Heart right ventricle (tissue), 16 donors: ENCODE measurements at regions of chr1 and their contacts with region 1.

Region 1: DNA sequence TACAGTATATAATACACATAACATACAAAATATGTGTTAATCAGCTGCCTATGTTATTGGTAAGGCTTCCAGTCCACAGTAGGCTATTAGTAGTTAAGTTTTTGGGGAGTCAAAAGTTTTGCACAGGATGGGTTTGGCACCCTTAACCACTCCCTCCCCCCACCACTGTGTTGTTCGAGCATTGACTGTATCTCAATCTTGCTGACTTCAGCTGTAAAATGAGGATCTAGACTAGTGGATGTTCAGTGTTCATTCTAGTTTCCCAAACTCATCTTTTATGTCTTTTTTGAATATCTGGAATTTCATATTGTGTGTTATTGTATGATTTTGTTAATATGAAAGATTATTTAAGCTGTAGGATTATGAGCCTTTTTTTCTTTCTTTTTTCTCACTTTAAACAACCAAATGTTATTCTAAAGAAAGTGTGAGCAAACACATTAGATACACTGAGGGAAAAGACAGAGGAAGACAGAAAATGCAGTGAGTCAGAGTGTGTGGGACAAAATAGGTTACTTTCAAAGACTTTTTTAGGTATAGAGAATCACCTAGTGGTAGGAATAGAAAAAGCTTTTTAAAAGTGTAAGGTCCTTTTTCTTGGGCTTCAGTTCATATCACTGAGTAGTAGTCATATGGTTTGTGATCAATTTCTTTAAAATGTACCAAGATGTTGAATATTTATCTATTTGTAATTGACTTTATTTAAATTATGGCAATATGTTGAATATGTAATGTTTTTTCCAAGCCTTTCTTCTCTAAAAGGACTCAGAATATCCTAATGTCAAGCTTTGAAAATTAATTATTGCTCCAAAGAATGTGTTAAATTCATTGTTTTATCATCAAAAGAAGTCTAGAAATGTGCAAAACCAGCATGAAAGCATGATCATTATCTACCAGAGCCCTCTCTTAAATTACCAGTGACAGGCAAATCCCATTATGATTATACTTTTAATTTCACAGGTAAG is 17.9 kb upstream of the CENPF start:
- DNase-seq: no peak
- ATAC-seq: peak in 7 of 8 donors; percentile 72 to 87 (median 76)
- H3K4me3 ChIP-seq: no peak overlapping the region
- H3K27ac ChIP-seq: no peak overlapping the region
- H3K4me1 ChIP-seq: peaks cover 0 to 3% (median 0%) of the 10 kb centered on the region in 9 donors
- H3K27me3 ChIP-seq: no peaks in the 10 kb centered on the region
- CTCF ChIP-seq: peak; percentile 44 to 86 (median 76)

Region 2: GRCh38 chr1:214213136-214213535 is 371.9 kb before region 1 on chr1:
- intact Hi-C with region 1: loop called in 9 of 10 experiments (anchors 2 to 10 kb)
- DNase-seq: no peak
- ATAC-seq: no peak
- H3K4me3 ChIP-seq: no peak overlapping the region
- H3K27ac ChIP-seq: no peak overlapping the region
- H3K4me1 ChIP-seq: peaks cover 0 to 11% (median 4%) of the 10 kb centered on the region in 9 donors
- H3K27me3 ChIP-seq: peaks cover 0 to 5% (median 0%) of the 10 kb centered on the region in 7 donors
- CTCF ChIP-seq: no peak

Region 3: DNA sequence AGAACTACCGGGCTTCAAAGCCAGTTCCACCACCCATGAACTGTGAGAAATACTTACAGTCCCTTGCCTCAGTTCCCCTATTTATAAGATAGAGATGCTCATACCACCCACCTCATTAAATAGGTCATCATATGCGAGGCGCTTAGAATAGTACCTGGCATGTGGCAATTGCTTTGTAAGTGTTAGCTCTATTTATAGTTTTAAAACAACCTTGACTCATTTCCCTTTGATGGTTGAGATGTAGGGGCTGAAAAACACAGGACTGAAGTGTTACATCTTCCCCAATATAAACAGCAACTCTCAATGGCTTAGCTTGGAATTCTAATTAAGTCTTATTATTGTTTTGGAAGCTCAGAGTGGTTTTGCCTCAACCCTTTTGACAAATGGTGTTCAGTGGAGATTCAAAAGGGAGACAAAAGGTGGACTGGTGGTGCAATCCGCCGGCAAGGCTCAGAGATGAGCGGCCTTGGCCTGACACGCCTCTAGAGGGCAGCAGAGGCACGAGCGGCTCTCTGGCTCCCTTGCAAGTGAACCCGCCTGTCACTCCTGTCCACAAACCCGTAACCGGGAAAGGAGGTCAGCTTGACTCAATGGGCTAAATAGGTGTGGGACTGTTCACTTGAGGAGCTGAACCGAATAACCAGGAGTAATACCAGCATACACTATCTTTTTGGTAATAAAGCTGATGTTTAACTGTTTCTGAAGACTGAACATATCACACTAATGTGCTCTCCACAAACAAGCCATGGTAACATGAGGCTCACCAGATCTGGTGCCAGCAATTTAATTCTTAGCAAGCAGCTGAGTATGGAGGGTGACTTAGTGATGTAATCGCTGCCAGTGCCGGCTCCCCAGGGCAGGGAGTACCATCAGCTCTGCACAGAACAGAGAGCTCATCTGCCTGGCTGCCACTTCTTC is 323.6 kb before region 1 on chr1:
- intact Hi-C with region 1: loop called in 4 of 10 experiments (anchors 5 to 10 kb)
- DNase-seq: peak; percentile 86 to 87
- ATAC-seq: peak; percentile 93 to 98 (median 96)
- H3K4me3 ChIP-seq: no peak overlapping the region
- H3K27ac ChIP-seq: peak overlapping the region in 7 of 10 donors; percentile 23 to 85 (median 66)
- H3K4me1 ChIP-seq: peaks cover 0 to 20% (median 7%) of the 10 kb centered on the region in 9 donors
- H3K27me3 ChIP-seq: peaks cover 0 to 67% (median 24%) of the 10 kb centered on the region in 7 donors
- CTCF ChIP-seq: peak; percentile 92 to 99 (median 98)

Region 4: DNA sequence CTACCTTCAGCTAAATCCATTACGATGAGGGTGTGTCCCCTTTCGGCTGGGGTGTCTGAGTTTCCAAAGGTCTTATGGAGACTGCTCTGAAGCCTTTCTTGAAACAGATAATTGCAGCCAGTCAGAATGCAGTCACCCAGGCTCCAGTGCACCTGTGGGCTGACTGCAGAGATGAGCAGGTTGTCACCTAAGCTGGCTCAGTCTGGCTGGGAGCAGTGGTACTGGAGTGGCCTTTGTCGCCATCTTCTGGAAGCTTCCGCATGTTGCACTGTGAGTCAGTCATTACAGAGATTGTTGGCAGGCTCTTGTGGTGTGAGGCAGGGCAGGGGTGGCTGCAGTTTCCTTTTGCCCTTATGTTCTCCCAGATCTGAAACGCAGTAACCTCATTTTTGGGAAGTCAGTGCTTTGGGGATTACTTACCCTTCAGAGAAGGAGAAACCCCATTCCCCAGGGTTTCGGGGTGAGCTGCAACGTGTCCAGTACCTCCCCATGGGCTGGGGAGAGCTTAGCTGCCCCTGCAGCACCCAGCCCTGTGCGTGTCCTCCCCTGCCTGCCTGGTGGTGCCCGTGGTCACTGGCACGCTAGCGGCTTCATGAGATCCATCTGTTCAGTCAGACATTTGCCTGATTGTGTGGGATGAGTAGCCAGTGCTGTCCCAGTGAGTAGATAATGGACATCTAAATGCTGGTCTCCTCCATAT is 256.2 kb before region 1 on chr1:
- intact Hi-C with region 1: loop called in 9 of 10 experiments (anchors 1 to 10 kb)
- DNase-seq: peak; percentile 74 to 83
- ATAC-seq: peak; percentile 83 to 91 (median 88)
- H3K4me3 ChIP-seq: no peak overlapping the region
- H3K27ac ChIP-seq: peak overlapping the region in 6 of 10 donors; percentile 31 to 86 (median 76)
- H3K4me1 ChIP-seq: peaks cover 6 to 62% (median 27%) of the 10 kb centered on the region in 9 donors
- H3K27me3 ChIP-seq: no peaks in the 10 kb centered on the region
- CTCF ChIP-seq: peak; percentile 83 to 96 (median 92)

Region 5: GRCh38 chr1:214337511-214337910 is 247.6 kb before region 1 on chr1:
- intact Hi-C with region 1: loop called in 9 of 10 experiments (anchors 1 to 10 kb)
- DNase-seq: no peak
- ATAC-seq: peak in 7 of 8 donors; percentile 43 to 73 (median 52)
- H3K4me3 ChIP-seq: no peak overlapping the region
- H3K27ac ChIP-seq: peak overlapping the region in 9 of 10 donors; percentile 32 to 88 (median 80)
- H3K4me1 ChIP-seq: peaks cover 4 to 58% (median 18%) of the 10 kb centered on the region in 9 donors
- H3K27me3 ChIP-seq: no peaks in the 10 kb centered on the region
- CTCF ChIP-seq: no peak

Region 6: GRCh38 chr1:214386747-214387146 is 198.3 kb before region 1 on chr1:
- intact Hi-C with region 1: loop called in 6 of 10 experiments (anchors 5 to 10 kb)
- DNase-seq: no peak
- ATAC-seq: no peak
- H3K4me3 ChIP-seq: no peak overlapping the region
- H3K27ac ChIP-seq: no peak overlapping the region
- H3K4me1 ChIP-seq: no peaks in the 10 kb centered on the region
- H3K27me3 ChIP-seq: no peaks in the 10 kb centered on the region
- CTCF ChIP-seq: no peak

Region 7: DNA sequence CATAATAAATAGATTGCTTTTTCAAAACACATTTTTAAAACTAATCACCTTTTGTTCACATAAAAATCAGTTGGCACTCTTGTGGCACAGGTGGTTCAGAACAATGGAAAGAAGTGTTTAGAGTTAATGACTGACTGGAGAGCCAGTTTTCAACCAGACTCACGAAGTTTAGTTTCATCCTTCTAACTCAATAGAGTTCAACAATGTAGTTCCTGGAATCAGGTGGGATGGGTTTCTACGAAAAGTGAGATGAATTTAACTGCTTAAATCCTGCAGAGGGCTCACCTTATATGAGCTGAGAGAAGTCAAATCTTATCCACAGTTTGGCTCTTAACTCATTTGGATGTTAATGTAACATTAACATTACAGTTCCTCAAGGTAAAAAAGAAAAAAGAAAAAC is 187.6 kb before region 1 on chr1:
- intact Hi-C with region 1: loop called in 1 of 10 experiments (anchors 10 kb)
- DNase-seq: no peak
- ATAC-seq: no peak
- H3K4me3 ChIP-seq: no peak overlapping the region
- H3K27ac ChIP-seq: no peak overlapping the region
- H3K4me1 ChIP-seq: peaks cover 0 to 10% (median 0%) of the 10 kb centered on the region in 9 donors
- H3K27me3 ChIP-seq: no peaks in the 10 kb centered on the region
- CTCF ChIP-seq: no peak

Region 8: GRCh38 chr1:214473387-214473786 is 111.7 kb before region 1 on chr1:
- intact Hi-C with region 1: no loop called
- DNase-seq: no peak
- ATAC-seq: no peak
- H3K4me3 ChIP-seq: no peak overlapping the region
- H3K27ac ChIP-seq: no peak overlapping the region
- H3K4me1 ChIP-seq: peaks cover 2 to 62% (median 44%) of the 10 kb centered on the region in 9 donors
- H3K27me3 ChIP-seq: no peaks in the 10 kb centered on the region
- CTCF ChIP-seq: no peak

Region 9: DNA sequence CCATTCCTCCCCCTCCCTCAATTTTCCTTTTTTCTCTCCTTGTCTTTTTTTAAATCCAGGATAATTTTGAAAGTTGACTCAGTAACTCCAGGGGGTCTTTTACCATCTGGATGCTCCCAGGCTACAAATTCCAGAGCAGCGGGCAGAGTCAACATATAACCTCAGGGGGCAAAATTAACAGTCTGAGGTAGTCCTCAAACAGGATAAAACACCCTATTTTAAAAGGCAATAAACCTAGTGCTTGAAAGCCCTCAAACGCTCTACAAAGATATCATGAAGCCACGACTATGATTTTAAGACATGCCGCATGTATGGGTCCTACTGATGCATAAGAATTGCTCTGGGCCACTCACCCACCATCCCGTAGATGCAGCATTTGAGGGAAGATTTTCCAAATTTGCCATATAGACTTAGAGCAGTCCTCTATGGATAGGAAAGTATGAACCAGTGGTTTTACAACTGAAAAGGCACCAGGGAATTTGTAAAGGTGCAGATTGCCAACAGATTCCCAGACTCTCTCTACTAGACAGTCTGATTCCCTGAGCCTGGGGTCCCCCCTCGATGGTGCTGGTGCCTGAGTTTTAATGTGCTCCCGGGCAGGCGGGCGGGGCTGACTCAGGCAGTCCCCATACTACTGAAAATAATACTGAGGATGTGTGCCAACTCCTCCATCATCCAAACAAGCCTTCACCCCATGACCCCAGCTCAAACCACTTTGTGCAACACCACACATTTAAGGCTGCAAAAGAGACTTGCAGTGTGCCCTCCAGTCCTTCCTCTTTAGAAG is 70.9 kb before region 1 on chr1:
- intact Hi-C with region 1: no loop called
- DNase-seq: no peak
- ATAC-seq: peak in 2 of 8 donors; percentile 7 to 29
- H3K4me3 ChIP-seq: no peak overlapping the region
- H3K27ac ChIP-seq: no peak overlapping the region
- H3K4me1 ChIP-seq: peaks cover 2 to 53% (median 24%) of the 10 kb centered on the region in 9 donors
- H3K27me3 ChIP-seq: no peaks in the 10 kb centered on the region
- CTCF ChIP-seq: no peak

Region 10: GRCh38 chr1:214525535-214526019 is 59.5 kb before region 1 on chr1:
- intact Hi-C with region 1: no loop called
- DNase-seq: no peak
- ATAC-seq: no peak
- H3K4me3 ChIP-seq: no peak overlapping the region
- H3K27ac ChIP-seq: no peak overlapping the region
- H3K4me1 ChIP-seq: peaks cover 0 to 55% (median 13%) of the 10 kb centered on the region in 9 donors
- H3K27me3 ChIP-seq: no peaks in the 10 kb centered on the region
- CTCF ChIP-seq: no peak

Region 11: GRCh38 chr1:214615871-214616270 is 30.8 kb after region 1 on chr1:
- intact Hi-C with region 1: no loop called
- DNase-seq: no peak
- ATAC-seq: no peak
- H3K4me3 ChIP-seq: no peak overlapping the region
- H3K27ac ChIP-seq: no peak overlapping the region
- H3K4me1 ChIP-seq: no peaks in the 10 kb centered on the region
- H3K27me3 ChIP-seq: no peaks in the 10 kb centered on the region
- CTCF ChIP-seq: no peak